Head of caudate nucleus (tissue), 42 donors: ENCODE measurements at regions of chr14 and their contacts with region 1.

Region 1: GRCh38 chr14:22829661-22830442 is at the start of gene MRPL52:
- DNase-seq: peak; percentile 84 to 97 (median 92)

Region 2: DNA sequence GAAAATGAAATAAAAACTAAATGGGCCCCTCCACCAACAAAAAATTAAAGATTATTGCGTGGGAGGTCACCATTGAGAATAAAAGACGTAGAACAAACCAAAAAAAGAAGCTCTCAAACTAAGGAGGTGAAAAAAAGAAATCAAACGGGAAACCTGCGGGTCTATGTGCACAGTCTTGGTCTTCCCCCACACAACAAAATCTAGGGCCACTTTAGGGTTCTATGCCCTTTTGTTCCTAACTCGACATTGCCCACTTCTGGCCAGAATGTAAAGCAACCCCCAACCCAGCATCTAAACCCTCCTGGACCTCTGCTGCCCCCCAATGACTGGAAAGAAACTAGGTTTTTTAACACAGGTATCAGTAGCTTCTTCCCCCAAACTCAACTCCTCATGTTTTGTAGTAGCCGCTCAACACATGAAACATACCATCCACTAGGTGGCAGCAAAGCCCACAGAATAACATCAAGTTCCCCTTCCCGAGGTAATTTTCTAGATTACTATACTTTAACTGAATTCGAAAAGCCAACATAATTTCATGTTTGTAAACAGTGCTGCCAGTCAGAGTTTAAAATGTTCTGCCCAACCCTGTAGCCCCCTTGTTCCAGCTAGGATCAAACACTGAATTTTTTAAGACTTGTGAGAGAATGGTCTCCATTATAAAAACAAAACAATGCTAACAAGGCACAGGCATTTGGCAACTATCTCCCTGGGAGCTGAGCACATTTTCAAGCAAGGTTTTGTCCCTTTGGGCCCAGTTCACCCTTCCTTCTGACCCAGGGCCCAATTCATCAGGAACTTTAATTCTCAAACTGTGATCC is 259.5 kb before region 1 on chr14:
- intact Hi-C with region 1: loop called (anchors 10 kb)
- DNase-seq: peak in 40 of 42 donors; percentile 39 to 92 (median 77)

Region 3: DNA sequence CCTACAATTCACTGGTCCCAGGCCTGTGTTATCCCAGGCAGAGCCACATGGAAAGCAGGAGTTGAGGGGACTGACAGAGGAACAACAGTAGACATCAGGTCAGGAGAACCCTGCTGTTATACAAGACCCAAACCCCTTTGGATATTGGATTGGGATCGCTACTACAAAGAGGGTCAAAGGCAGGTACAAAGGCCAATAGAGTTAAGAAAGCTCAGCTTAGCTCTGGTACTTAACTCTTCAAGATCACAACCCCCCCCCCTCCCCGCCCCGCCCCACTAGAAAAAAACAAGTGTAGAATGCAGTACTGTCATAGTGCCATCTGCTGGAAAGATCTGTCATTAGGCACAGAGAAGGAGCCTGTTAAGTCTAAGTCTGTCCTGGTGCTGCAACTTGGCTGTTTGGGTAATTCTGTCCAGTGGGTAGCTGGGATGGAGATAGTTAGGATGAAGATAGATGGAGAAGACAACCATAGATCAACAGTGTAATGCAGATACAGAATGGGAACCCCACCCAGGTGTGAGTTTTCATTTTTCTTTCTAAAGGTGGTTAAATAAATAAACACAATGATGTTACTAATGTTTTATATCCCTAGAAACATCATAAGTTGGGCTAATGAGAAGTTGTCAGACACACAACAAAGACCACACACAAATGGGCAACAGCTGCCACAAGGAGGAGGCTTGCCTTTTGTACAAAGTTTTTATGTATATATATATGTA is 70.4 kb after region 1 on chr14:
- intact Hi-C with region 1: loop called (anchors 10 kb)
- DNase-seq: peak in 13 of 42 donors; percentile 43 to 71 (median 55)